HEK293 (cell line): ENCODE measurements at regions of chr10 and their contacts with region 1.

Region 1: GRCh38 chr10:14200698-14201544 is 129.8 kb downstream of the FRMD4A start:
- H3K4me3 ChIP-seq: no peak overlapping the region
- H3K27ac ChIP-seq: no peak overlapping the region
- H3K4me1 ChIP-seq: no peaks in the 10 kb centered on the region
- CTCF ChIP-seq: no peak

Region 2: GRCh38 chr10:13816195-13816926 is 384.6 kb before region 1 on chr10:
- CTCF ChIA-PET with region 1: no interaction called
- POLR2A ChIA-PET with region 1: no interaction called
- H3K4me3 ChIP-seq: no peak overlapping the region
- H3K27ac ChIP-seq: no peak overlapping the region
- H3K4me1 ChIP-seq: no peaks in the 10 kb centered on the region
- CTCF ChIP-seq: no peak

Region 3: DNA sequence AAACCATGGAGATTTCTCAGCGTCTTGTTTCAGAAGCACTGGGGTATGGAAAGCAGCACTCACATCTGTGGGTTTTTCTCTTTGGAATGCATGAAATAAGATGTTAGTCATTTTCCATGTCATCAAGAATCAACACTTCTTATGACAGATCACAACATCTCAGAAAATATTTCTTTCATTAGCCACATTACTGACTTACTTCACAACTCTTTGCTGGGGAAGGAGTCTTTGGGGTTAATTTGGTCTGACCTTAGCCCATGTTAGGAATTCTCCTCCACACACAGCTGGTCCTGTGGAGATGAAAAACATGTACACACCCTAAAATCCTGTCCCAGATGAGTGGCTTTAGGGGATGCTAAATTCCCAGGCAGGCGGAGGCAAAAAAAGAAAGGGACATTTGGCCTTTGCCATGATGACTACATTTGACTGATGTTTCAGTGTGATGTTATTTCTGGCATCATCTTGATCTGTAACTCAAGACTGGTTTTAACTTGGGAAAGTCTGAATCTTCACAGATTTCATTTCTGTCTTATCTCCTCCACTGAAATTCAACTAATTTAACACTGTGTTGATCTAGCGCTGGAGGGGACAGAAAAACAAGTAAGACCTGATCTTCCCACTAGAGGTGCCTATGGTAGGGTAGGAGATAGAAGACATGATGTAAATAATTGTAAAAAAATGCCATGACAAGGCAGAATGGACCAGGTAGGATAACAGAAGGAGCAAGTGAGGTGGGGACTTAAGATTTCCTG is 250.9 kb before region 1 on chr10:
- CTCF ChIA-PET with region 1: no interaction called
- POLR2A ChIA-PET with region 1: no interaction called
- H3K4me3 ChIP-seq: no peak overlapping the region
- H3K27ac ChIP-seq: no peak overlapping the region
- H3K4me1 ChIP-seq: no peaks in the 10 kb centered on the region
- CTCF ChIP-seq: no peak

Region 4: DNA sequence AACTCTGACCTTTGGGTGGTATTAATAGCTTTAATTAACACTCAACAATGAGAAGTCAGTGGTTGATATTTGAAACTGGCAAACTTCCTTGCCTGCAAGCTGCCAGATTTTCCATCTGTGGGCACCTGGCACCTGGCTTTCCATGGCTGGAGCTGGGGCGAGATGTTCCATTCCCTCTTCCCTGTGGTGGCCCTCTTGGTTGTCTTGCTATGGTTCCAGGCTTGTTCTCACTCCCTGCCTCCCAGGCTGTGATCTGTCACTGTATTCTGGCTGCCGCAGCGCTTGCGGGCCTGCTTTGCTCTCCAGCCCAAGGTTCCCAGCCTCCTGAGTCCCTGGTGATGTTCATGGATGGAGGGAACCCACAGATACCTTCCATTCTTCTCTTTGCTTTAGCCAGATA is 71.2 kb before region 1 on chr10:
- CTCF ChIA-PET with region 1: no interaction called
- POLR2A ChIA-PET with region 1: no interaction called
- H3K4me3 ChIP-seq: no peak overlapping the region
- H3K27ac ChIP-seq: no peak overlapping the region
- H3K4me1 ChIP-seq: no peaks in the 10 kb centered on the region
- CTCF ChIP-seq: no peak

Region 5: GRCh38 chr10:14142606-14143250 is 58.2 kb before region 1 on chr10:
- CTCF ChIA-PET with region 1: interaction called, 10 read pairs
- POLR2A ChIA-PET with region 1: no interaction called
- H3K4me3 ChIP-seq: no peak overlapping the region
- H3K27ac ChIP-seq: no peak overlapping the region
- H3K4me1 ChIP-seq: no peaks in the 10 kb centered on the region
- CTCF ChIP-seq: no peak

Region 6: DNA sequence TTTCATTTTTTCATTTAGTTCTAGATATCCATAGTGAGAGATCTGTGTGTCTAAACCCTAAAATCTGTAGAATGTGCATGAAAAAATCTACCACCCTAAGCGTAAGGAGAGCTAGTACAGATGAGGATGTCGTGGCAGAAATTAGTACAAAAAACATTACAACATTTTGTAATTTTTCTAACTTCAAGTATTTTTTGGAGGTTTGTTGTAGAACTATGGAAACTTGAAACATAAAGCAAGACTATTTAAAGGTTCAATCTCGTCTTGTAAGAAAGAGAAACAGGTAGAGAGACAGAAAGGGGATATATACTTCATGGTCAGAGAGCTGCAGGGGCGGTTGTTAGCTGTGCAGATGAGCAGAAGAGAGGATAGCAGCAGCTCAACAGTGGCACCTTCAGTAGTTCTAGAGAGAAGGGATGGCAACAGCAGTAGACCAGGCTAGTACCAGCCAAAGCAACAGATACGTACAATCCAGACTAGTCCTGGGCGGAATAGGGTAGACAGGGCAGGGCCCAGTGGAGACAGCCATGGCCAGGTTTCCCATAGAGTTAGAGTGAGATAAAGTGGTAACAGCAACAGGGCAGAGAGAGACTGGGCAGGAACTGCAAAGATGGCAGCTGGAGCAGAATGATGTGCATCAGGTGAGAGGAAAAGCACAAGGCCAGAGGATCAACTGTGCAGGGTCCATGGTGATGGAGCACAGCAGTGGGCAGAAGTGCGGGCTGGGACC is 15.4 kb before region 1 on chr10:
- CTCF ChIA-PET with region 1: interaction called, 19 read pairs
- POLR2A ChIA-PET with region 1: no interaction called
- H3K4me3 ChIP-seq: no peak overlapping the region
- H3K27ac ChIP-seq: no peak overlapping the region
- H3K4me1 ChIP-seq: no peaks in the 10 kb centered on the region
- CTCF ChIP-seq: no peak

Region 7: GRCh38 chr10:14478604-14479003 is 277.7 kb after region 1 on chr10:
- CTCF ChIA-PET with region 1: interaction called, 115 read pairs
- POLR2A ChIA-PET with region 1: no interaction called
- H3K4me3 ChIP-seq: no peak overlapping the region
- H3K27ac ChIP-seq: no peak overlapping the region
- H3K4me1 ChIP-seq: no peaks in the 10 kb centered on the region
- CTCF ChIP-seq: no peak